Heart left ventricle (tissue), 16 donors: ENCODE measurements at regions of chr4 and their contacts with region 1.

Region 1: GRCh38 chr4:113636438-113636818 is 125.1 kb downstream of the CAMK2D start:
- DNase-seq: no peak
- ATAC-seq: peak in 2 of 4 donors; percentile 6
- H3K4me3 ChIP-seq: no peak overlapping the region
- H3K27ac ChIP-seq: peak overlapping the region; percentile 62 to 95 (median 77)
- H3K4me1 ChIP-seq: peaks cover 0 to 90% (median 70%) of the 10 kb centered on the region in 12 donors
- H3K27me3 ChIP-seq: no peaks in the 10 kb centered on the region
- CTCF ChIP-seq: peak in 3 of 12 donors; percentile 6 to 35 (median 19)
- POLR2A ChIP-seq: no peak

Region 2: GRCh38 chr4:113468165-113469022 is 168.0 kb before region 1 on chr4:
- intact Hi-C with region 1: loop called in 1 of 10 experiments (anchors 5 kb)
- DNase-seq: peak in 4 of 5 donors; percentile 71 to 89 (median 82)
- ATAC-seq: peak; percentile 92 to 97 (median 96)
- H3K4me3 ChIP-seq: peak overlapping the region in 1 of 12 donors; percentile 1
- H3K27ac ChIP-seq: peak overlapping the region; percentile 75 to 95 (median 86)
- H3K4me1 ChIP-seq: peaks cover 2 to 50% (median 31%) of the 10 kb centered on the region in 12 donors
- H3K27me3 ChIP-seq: no peaks in the 10 kb centered on the region
- CTCF ChIP-seq: no peak
- POLR2A ChIP-seq: peak in 1 of 2 donors; percentile 43

Region 3: GRCh38 chr4:113555868-113556267 is 80.6 kb before region 1 on chr4:
- intact Hi-C with region 1: loop called in 1 of 10 experiments (anchors 10 kb)
- DNase-seq: peak in 4 of 5 donors; percentile 25 to 68 (median 50)
- ATAC-seq: peak; percentile 83 to 96 (median 90)
- H3K4me3 ChIP-seq: peak overlapping the region in 4 of 12 donors; percentile 7 to 15 (median 10)
- H3K27ac ChIP-seq: peak overlapping the region; percentile 64 to 92 (median 81)
- H3K4me1 ChIP-seq: peaks cover 0 to 39% (median 24%) of the 10 kb centered on the region in 12 donors
- H3K27me3 ChIP-seq: no peaks in the 10 kb centered on the region
- CTCF ChIP-seq: no peak
- POLR2A ChIP-seq: no peak

Region 4: GRCh38 chr4:113678641-113679040 is 42.2 kb after region 1 on chr4:
- intact Hi-C with region 1: loop called in 1 of 10 experiments (anchors 2 kb)
- DNase-seq: no peak
- ATAC-seq: no peak
- H3K4me3 ChIP-seq: no peak overlapping the region
- H3K27ac ChIP-seq: peak overlapping the region in 3 of 12 donors; percentile 2 to 27 (median 16)
- H3K4me1 ChIP-seq: peaks cover 9 to 82% (median 51%) of the 10 kb centered on the region in 12 donors
- H3K27me3 ChIP-seq: no peaks in the 10 kb centered on the region
- CTCF ChIP-seq: no peak
- POLR2A ChIP-seq: no peak

Region 5: DNA sequence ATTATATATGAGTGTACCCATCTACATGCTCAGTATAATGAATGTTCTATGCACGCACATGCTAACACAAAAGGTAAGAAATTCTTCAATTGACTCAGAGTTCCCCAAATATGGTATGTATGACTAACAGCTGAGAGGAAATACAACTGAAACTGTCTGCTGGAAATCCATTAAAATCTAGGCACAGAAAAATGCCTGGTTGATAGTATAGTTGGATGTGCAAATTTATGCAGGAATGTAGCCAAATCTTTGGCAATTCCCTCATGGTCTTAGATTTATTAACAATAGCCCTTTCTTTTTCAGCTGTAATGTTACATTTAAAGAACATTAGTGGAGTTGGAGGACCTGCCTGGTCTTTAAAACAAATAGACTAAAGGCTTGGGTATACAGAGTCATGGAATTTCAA is 119.6 kb after region 1 on chr4:
- intact Hi-C with region 1: loop called in 5 of 10 experiments (anchors 5 to 10 kb)
- DNase-seq: no peak
- ATAC-seq: no peak
- H3K4me3 ChIP-seq: no peak overlapping the region
- H3K27ac ChIP-seq: peak overlapping the region in 4 of 12 donors; percentile 5 to 39 (median 12)
- H3K4me1 ChIP-seq: peaks cover 3 to 69% (median 35%) of the 10 kb centered on the region in 12 donors
- H3K27me3 ChIP-seq: no peaks in the 10 kb centered on the region
- CTCF ChIP-seq: no peak
- POLR2A ChIP-seq: no peak